ENCODE measurements at regions of chr4 and their contacts with region 1.

Region 1: DNA sequence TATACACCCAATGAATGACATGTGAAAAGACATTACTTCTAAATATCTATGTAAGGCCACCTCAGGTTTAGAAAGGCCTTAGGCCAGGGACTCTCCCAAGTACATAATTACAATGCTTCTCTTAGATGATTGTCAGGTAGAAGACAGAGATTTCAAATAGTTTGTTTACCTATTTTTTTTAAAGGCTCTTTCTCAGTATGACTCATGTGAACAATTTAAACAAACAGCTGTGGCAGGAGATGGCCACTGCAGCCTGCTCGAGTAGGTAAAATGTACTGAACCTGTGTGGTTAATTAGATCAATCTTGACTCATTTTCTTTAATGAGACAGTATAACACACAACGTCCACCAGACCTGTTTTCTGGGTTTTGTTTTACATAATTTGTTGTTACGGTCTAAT is 50.2 kb downstream of the LEF1 start:
- DNase-seq: no peak
- H3K4me3 Mint-ChIP-seq: peak overlapping the region; percentile 74
- H3K27ac Mint-ChIP-seq: peak overlapping the region; percentile 89
- H3K4me1 Mint-ChIP-seq: peaks cover 93% of the 10 kb centered on the region
- H3K27me3 Mint-ChIP-seq: no peaks in the 10 kb centered on the region

Region 2: GRCh38 chr4:108043526-108043925 is 75.0 kb before region 1 on chr4:
- intact Hi-C with region 1: no loop called
- DNase-seq: no peak
- H3K4me3 Mint-ChIP-seq: no peak overlapping the region
- H3K27ac Mint-ChIP-seq: peak overlapping the region; percentile 60
- H3K4me1 Mint-ChIP-seq: peaks cover 42% of the 10 kb centered on the region
- H3K27me3 Mint-ChIP-seq: no peaks in the 10 kb centered on the region

Region 3: DNA sequence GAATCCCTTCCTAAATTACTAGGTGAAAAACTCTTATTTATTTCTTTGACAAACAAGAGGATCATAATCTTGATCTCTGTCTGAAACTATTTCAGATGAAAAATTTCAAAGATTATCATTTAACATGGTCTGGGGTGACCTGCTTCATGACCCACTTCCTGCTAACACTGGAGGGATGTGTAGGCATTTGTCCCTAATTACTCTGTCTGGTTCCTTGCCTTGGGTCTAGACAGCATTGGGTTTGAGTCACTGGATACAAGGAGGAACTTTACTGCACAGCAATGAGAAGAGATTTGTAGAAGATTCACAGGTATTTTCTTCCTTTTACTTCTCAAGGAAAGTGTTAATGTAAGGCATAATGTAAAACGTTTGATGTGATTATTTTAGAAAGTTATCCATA is 17.7 kb before region 1 on chr4:
- intact Hi-C with region 1: loop called (anchors 1 kb)
- DNase-seq: no peak
- H3K4me3 Mint-ChIP-seq: no peak overlapping the region
- H3K27ac Mint-ChIP-seq: peak overlapping the region; percentile 77
- H3K4me1 Mint-ChIP-seq: peaks cover 89% of the 10 kb centered on the region
- H3K27me3 Mint-ChIP-seq: no peaks in the 10 kb centered on the region

Region 4: GRCh38 chr4:108135549-108136209 is 17.2 kb after region 1 on chr4:
- intact Hi-C with region 1: loop called (anchors 1 kb)
- DNase-seq: no peak
- H3K4me3 Mint-ChIP-seq: peak overlapping the region; percentile 56
- H3K27ac Mint-ChIP-seq: peak overlapping the region; percentile 87
- H3K4me1 Mint-ChIP-seq: peaks cover 75% of the 10 kb centered on the region
- H3K27me3 Mint-ChIP-seq: no peaks in the 10 kb centered on the region

Region 5: GRCh38 chr4:108166441-108167315 is 48.2 kb after region 1 on chr4:
- intact Hi-C with region 1: loop called (anchors 1 kb)
- DNase-seq: peak; percentile 68
- H3K4me3 Mint-ChIP-seq: peak overlapping the region; percentile 98
- H3K27ac Mint-ChIP-seq: peak overlapping the region; percentile 98
- H3K4me1 Mint-ChIP-seq: peaks cover 68% of the 10 kb centered on the region
- H3K27me3 Mint-ChIP-seq: peaks cover 12% of the 10 kb centered on the region

Measured in activated T-helper 1 cell treated with anti-CD3 and anti-CD28 coated beads, Interleukin-12 subunit alpha, Interleukin-12 subunit beta, Interleukin-2, Interleukin-4 antibody, amounts not matched to agents 30 ng/mL and 10 ng/mL and 1 ng/mL, durations not matched to agents 14 hours and 24 hours and 36 hours (primary cell).